ENCODE measurements at regions of chr2 and their contacts with region 1.

Region 1: GRCh38 chr2:26456440-26457250 is 21.3 kb downstream of the OTOF start:
- DNase-seq: peak; percentile 76 to 94
- H3K4me3 ChIP-seq: no peak overlapping the region
- H3K27ac ChIP-seq: peak overlapping the region; percentile 85
- H3K4me1 ChIP-seq: peaks cover 34% of the 10 kb centered on the region
- H3K27me3 ChIP-seq: no peaks in the 10 kb centered on the region
- CTCF ChIP-seq: no peak

Region 2: DNA sequence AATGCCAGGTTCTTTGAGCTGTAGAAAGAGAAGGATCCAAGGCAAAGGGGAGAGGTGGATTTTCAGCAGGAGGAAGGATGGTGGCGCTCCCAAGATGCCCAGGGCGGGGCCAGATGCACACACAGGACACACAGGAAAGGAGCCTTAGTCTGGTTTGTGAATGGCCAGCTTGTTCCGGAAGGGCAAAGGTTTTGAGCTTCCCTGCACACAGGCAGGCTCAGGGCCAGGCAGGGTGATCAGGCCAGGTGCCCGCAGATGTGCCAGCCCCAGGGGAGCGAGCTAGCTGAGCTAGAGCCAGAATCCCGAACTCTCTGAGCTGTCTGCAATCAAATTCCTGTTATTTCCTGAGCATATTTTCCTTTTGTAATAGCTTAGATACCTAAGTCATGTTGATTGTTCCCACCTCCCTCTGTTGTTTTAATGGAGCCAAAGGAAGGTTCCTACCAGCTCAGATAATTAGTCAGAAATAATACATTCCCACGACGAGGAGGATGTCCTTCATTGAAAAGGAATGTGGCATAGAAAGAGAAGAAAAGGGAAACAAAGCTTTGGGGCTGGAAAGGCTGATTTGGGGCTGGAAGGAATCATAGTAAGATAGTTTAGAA is 35.0 kb after region 1 on chr2:
- CTCF ChIA-PET with region 1: no interaction called
- POLR2A ChIA-PET with region 1: interaction called, 26 read pairs
- intact Hi-C with region 1: no loop called
- DNase-seq: no peak
- H3K4me3 ChIP-seq: no peak overlapping the region
- H3K27ac ChIP-seq: no peak overlapping the region
- H3K4me1 ChIP-seq: no peaks in the 10 kb centered on the region
- H3K27me3 ChIP-seq: peaks cover 24% of the 10 kb centered on the region; the same call in 1 of the 2 replicates
- CTCF ChIP-seq: no peak

Region 3: DNA sequence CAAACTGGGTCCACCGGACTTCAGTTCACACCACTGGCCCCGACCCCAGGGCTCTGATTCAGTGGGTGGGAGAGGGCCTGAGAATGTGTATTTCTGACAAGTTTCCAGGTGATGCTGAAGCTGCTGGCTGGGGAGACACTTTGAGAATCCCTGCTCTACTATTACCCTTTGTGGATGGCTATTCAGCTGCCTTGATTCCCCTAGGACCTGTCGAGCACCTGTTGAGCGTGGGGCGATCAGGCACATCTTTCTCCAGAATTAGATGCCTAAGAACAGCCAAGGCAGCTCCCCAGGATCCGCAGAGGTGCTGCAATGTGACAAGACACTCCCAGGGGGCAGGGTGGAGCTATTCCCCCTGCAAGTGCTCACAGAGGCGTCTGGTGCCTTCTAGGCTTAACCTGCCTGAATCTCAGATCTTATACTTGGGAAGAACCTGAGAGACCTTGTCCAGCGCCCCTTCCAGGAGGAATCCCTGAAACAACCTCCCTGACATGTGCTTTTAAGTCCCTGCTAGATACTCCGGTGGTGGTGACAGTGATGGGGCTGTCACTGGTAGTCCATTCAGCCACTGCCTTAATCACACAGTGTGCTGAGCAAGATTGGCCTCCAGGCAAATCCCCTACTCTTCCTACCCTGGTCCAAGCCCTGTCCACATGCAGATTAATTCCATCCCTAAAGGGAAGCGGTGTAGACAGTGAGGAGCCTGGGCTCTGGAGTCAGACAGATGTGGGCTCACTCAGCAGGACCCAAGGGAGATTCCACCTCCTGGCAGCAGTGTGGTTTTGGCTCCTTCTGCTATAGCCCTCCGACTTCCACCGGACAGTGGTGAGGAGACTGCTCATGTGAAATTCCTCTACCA is 64.6 kb after region 1 on chr2:
- CTCF ChIA-PET with region 1: no interaction called
- POLR2A ChIA-PET with region 1: no interaction called
- intact Hi-C with region 1: no loop called
- DNase-seq: peak in 1 of 2 experiments; percentile 23
- H3K4me3 ChIP-seq: no peak overlapping the region
- H3K27ac ChIP-seq: no peak overlapping the region
- H3K4me1 ChIP-seq: no peaks in the 10 kb centered on the region
- H3K27me3 ChIP-seq: peaks cover 59% of the 10 kb centered on the region
- CTCF ChIP-seq: peak; percentile 58